Activated naive CD4-positive, alpha-beta T cell treated with anti-CD3 and anti-CD28 coated beads, Interleukin-2, amount 10 ng/mL, durations not matched to agents 7 days and 5 days (primary cell): ENCODE measurements at regions of chr18 and their contacts with region 1.

Region 1: DNA sequence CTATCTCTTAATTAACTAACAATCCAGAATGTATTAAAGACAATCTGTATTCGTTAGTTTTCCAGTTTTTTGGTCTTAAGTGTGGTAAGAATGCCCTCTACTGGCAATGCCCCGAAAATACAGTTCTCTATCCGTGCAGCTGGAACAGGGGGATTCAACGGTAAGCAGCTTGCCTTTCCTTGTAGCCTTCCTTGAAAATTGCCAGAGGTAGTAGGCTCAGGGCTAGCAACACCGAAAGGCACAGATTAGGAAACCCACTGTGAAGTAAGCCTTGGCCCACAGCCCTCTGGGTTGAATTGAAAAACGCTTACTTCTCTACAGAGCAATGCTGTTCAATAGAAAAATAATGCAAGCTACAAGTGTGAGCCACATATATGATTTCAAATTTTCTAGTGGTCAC is 17.1 kb upstream of the VPS4B start:
- DNase-seq: peak; percentile 60
- H3K4me3 Mint-ChIP-seq: no peak overlapping the region
- H3K27ac Mint-ChIP-seq: no peak overlapping the region
- H3K4me1 Mint-ChIP-seq: peaks cover 4% of the 10 kb centered on the region
- H3K27me3 Mint-ChIP-seq: peaks cover 47% of the 10 kb centered on the region

Region 2: GRCh38 chr18:63016270-63016669 is 423.1 kb before region 1 on chr18:
- CTCF ChIA-PET with region 1: interaction called, 30 read pairs
- DNase-seq: peak; percentile 67
- H3K4me3 Mint-ChIP-seq: no peak overlapping the region
- H3K27ac Mint-ChIP-seq: no peak overlapping the region
- H3K4me1 Mint-ChIP-seq: no peaks in the 10 kb centered on the region
- H3K27me3 Mint-ChIP-seq: peaks cover 38% of the 10 kb centered on the region

Region 3: GRCh38 chr18:63253428-63254372 is 185.6 kb before region 1 on chr18:
- CTCF ChIA-PET with region 1: no interaction called
- DNase-seq: no peak
- H3K4me3 Mint-ChIP-seq: no peak overlapping the region
- H3K27ac Mint-ChIP-seq: peak overlapping the region; percentile 63
- H3K4me1 Mint-ChIP-seq: peaks cover 72% of the 10 kb centered on the region
- H3K27me3 Mint-ChIP-seq: no peaks in the 10 kb centered on the region

Region 4: GRCh38 chr18:63339920-63340484 is 99.3 kb before region 1 on chr18:
- CTCF ChIA-PET with region 1: interaction called, 139 read pairs
- DNase-seq: peak; percentile 66
- H3K4me3 Mint-ChIP-seq: no peak overlapping the region
- H3K27ac Mint-ChIP-seq: no peak overlapping the region
- H3K4me1 Mint-ChIP-seq: no peaks in the 10 kb centered on the region
- H3K27me3 Mint-ChIP-seq: no peaks in the 10 kb centered on the region

Region 5: DNA sequence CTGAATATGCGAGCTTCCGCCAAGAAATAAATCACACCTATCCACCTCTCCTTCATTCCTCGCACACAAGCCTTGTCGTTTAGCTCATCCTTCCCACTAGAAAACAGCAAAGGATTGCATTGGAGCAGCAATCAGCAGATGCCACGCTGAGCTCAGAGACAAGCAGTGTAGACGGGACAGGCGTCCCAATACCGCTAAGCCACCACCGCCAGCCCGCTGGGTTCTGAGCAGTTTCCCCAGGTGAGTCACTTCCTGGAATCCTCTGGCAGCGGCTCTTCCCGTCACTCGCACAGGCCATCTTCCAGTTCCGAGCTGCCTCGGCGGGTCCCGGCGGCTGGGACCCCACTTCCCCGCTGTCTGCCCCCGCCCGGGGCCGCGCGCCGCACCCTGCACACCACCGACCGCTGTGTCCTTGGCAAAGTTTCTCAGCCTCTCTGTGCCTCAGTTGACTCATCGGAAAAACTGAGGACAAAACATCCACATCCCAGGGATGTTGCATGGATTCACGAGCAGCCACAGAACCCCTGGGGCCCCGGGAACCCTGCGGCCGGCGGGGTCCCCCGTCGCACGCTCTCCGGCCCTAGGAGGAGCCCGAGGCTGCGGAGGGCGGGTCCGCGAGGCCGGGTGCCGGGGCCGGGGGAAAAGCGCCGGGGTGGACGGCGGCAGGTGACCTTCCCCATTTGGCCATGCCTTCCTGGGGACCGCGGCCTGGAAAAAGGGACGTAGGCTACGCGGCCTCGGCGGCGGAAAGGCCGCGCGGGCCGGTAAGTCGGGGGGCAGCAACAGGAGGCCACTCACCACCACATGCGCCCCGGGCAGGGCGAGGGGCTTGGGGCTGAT is 72.9 kb before region 1 on chr18:
- CTCF ChIA-PET with region 1: interaction called, 24 read pairs
- DNase-seq: peak; percentile 80
- H3K4me3 Mint-ChIP-seq: peak overlapping the region; percentile 86
- H3K27ac Mint-ChIP-seq: peak overlapping the region; percentile 90
- H3K4me1 Mint-ChIP-seq: peaks cover 44% of the 10 kb centered on the region
- H3K27me3 Mint-ChIP-seq: no peaks in the 10 kb centered on the region

Region 6: GRCh38 chr18:63427558-63427957 is 11.8 kb before region 1 on chr18:
- CTCF ChIA-PET with region 1: interaction called, 26 read pairs
- DNase-seq: no peak
- H3K4me3 Mint-ChIP-seq: no peak overlapping the region
- H3K27ac Mint-ChIP-seq: no peak overlapping the region
- H3K4me1 Mint-ChIP-seq: peaks cover 15% of the 10 kb centered on the region
- H3K27me3 Mint-ChIP-seq: peaks cover 41% of the 10 kb centered on the region